WTC11 (cell line): ENCODE measurements at regions of chr3 and their contacts with region 1.

Region 1: GRCh38 chr3:55485211-55485791 is 1.8 kb downstream of the WNT5A start:
- DNase-seq: peak; percentile 90
- ATAC-seq: peak; percentile 16
- H3K4me3 Mint-ChIP-seq: peak overlapping the region; percentile 85
- H3K27ac Mint-ChIP-seq: peak overlapping the region; percentile 95
- H3K4me1 Mint-ChIP-seq: peaks cover 39% of the 10 kb centered on the region
- H3K27me3 Mint-ChIP-seq: peaks cover 91% of the 10 kb centered on the region
- CTCF ChIP-seq: peak; percentile 81

Region 2: GRCh38 chr3:55721716-55722484 is 236.6 kb after region 1 on chr3:
- CTCF ChIA-PET with region 1: interaction called, 13 read pairs
- POLR2A ChIA-PET with region 1: no interaction called
- DNase-seq: peak; percentile 43
- ATAC-seq: peak; percentile 66
- H3K4me3 Mint-ChIP-seq: no peak overlapping the region
- H3K27ac Mint-ChIP-seq: no peak overlapping the region
- H3K4me1 Mint-ChIP-seq: peaks cover 45% of the 10 kb centered on the region
- H3K27me3 Mint-ChIP-seq: no peaks in the 10 kb centered on the region
- CTCF ChIP-seq: peak; percentile 48; the same call in 1 of the 2 replicates

Region 3: GRCh38 chr3:55897573-55898224 is 412.4 kb after region 1 on chr3:
- CTCF ChIA-PET with region 1: interaction called, 10 read pairs
- POLR2A ChIA-PET with region 1: no interaction called
- DNase-seq: no peak
- ATAC-seq: peak; percentile 84
- H3K4me3 Mint-ChIP-seq: no peak overlapping the region
- H3K27ac Mint-ChIP-seq: no peak overlapping the region
- H3K4me1 Mint-ChIP-seq: peaks cover 16% of the 10 kb centered on the region
- H3K27me3 Mint-ChIP-seq: no peaks in the 10 kb centered on the region
- CTCF ChIP-seq: no peak